Activated T-helper 1 cell treated with anti-CD3 and anti-CD28 coated beads, Interleukin-12 subunit alpha, Interleukin-12 subunit beta, Interleukin-2, Interleukin-4 antibody, amounts not matched to agents 30 ng/mL and 10 ng/mL and 1 ng/mL, durations not matched to agents 14 hours and 24 hours and 36 hours (primary cell): ENCODE measurements at regions of chr9 and their contacts with region 1.

Region 1: GRCh38 chr9:21709464-21710058 is 92.9 kb upstream of the MTAP start:
- DNase-seq: peak; percentile 31
- H3K4me3 Mint-ChIP-seq: no peak overlapping the region
- H3K27ac Mint-ChIP-seq: no peak overlapping the region
- H3K4me1 Mint-ChIP-seq: peaks cover 5% of the 10 kb centered on the region
- H3K27me3 Mint-ChIP-seq: peaks cover 10% of the 10 kb centered on the region

Region 2: DNA sequence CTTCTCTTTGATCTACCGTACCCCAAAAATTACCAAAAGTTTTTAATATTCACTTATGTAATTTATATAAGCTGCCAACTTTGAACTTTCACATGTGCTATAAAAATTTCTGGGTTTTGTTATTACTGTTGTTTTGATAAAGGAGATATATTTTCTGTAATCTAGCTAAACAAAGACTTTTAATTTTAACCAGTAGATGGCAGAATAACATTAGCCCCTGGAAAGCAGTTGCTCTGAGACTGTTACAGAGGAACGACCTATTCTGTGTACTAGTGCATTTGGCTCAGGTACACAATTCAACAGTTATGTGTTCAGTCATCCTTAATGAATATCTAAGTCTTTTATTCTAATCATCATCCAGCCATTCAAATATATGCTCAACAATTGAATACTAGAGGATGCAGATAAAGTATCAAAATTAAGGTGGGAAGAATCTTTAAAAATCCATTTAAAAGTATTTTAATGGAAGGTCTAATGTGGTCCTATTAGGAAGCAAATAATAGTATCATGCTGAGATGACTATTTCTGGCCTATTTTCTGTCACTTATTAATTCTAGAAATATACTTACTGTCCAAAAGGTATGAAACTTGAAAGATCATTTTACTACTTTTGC is 382.9 kb before region 1 on chr9:
- intact Hi-C with region 1: loop called (anchors 5 kb)
- DNase-seq: no peak
- H3K4me3 Mint-ChIP-seq: no peak overlapping the region
- H3K27ac Mint-ChIP-seq: no peak overlapping the region
- H3K4me1 Mint-ChIP-seq: peaks cover 29% of the 10 kb centered on the region
- H3K27me3 Mint-ChIP-seq: no peaks in the 10 kb centered on the region

Region 3: DNA sequence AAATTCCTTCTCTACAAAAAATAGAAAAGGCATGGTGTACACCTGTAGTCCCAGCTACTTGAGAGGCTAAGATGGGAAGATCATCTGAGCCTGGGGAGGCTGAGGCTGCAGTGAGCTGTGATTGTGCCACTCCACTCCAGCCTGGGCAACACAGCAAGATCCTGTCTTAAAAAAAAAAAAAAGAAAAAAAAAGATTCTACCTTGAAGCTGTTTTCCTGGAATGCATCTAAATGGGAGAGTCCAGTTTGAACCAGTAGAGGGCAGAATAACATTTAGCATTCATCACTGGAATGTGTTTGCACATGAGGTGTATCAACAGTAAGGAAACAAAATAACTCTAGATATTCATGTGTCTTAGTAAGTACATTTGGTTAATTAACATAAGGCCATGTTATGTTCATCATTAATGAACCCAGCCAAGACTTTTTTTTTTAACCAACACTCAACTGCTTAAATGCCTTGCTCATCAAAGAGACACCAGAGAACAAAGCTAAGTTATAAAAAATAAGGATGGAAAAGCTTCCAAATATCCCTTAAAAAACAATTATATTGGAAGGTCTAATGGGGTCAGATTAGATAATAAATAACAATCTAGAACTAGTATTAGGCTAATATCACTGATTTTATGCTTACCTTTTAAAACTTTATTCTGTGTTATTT is 243.6 kb before region 1 on chr9:
- intact Hi-C with region 1: loop called (anchors 1 kb)
- DNase-seq: peak; percentile 10
- H3K4me3 Mint-ChIP-seq: no peak overlapping the region
- H3K27ac Mint-ChIP-seq: no peak overlapping the region
- H3K4me1 Mint-ChIP-seq: no peaks in the 10 kb centered on the region
- H3K27me3 Mint-ChIP-seq: peaks cover 34% of the 10 kb centered on the region

Region 4: GRCh38 chr9:21559424-21560280 is 149.9 kb before region 1 on chr9:
- intact Hi-C with region 1: loop called (anchors 5 kb)
- DNase-seq: peak; percentile 16
- H3K4me3 Mint-ChIP-seq: peak overlapping the region; percentile 85
- H3K27ac Mint-ChIP-seq: no peak overlapping the region
- H3K4me1 Mint-ChIP-seq: peaks cover 17% of the 10 kb centered on the region
- H3K27me3 Mint-ChIP-seq: peaks cover 56% of the 10 kb centered on the region

Region 5: DNA sequence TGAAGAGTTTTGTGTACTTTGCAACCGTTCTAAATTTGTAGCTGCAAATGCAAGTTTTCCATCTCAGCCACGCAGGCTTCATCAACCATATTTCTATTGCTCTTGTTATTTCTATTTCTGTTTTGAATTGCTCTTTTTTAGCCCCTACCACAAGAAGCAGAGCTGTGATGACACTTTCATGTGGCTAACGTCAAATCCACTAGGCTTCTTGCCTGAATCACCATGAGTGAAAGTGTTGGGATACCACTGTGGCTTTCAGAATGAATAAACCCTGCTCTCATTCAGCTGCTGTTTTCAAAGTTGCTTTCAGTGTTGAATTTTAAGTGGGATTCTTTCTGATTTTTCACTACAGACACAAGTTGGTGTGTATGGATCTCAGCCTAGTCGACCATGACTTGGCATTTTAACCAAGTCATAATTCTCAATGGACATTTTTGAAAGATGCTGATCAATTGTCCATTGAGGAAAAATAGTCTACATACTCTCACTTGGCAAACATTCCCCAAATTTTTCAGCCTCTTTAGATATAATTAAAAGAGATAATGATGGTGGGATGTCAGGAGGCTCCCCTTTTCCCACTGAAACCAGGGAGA is 51.8 kb after region 1 on chr9:
- intact Hi-C with region 1: loop called (anchors 2 kb)
- DNase-seq: peak; percentile 46
- H3K4me3 Mint-ChIP-seq: no peak overlapping the region
- H3K27ac Mint-ChIP-seq: peak overlapping the region; percentile 18
- H3K4me1 Mint-ChIP-seq: peaks cover 9% of the 10 kb centered on the region
- H3K27me3 Mint-ChIP-seq: peaks cover 78% of the 10 kb centered on the region